ENCODE measurements at regions of chr15 and their contacts with region 1.

Region 1: GRCh38 chr15:99143655-99144610 is 39.1 kb downstream of the SYNM start:
- DNase-seq: peak; percentile 94
- H3K4me3 ChIP-seq: no peak overlapping the region
- H3K27ac ChIP-seq: peak overlapping the region; percentile 90 to 100 (median 96)
- H3K4me1 ChIP-seq: peaks cover 0 to 80% (median 68%) of the 10 kb centered on the region in 4 donors
- H3K27me3 ChIP-seq: no peaks in the 10 kb centered on the region
- CTCF ChIP-seq: no peak
- EP300 ChIP-seq: peak in 3 of 4 donors; percentile 15 to 88 (median 60)
- POLR2A ChIP-seq: no peak

Region 2: DNA sequence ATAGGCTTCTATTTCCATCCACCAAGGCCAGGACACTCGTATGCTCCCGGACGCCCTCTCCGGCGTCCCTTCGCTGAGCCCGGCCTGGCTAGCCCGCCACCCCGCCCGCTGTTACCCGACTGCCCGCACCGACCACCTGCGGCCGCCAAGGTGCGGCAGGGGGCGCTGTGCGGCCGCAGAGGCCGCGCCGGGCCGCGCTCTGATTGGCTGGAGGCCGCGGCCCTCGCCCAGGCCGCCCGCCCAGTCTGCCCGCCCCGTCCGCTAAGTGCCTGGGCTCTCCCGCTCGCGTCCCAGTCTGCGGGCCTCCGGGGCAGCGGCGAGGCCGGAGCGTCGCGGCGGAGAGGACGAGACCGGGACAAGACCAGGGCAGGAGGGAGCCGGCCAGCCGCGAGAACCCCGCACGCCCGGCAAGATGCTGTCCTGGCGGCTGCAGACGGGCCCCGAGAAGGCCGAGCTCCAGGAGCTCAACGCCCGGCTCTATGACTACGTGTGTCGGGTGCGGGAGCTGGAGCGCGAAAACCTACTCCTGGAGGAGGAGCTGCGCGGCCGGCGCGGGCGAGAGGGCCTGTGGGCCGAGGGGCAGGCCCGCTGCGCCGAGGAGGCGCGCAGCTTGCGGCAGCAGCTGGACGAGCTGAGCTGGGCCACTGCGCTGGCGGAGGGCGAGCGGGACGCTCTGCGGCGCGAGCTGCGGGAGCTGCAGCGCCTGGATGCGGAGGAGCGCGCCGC is 39.0 kb before region 1 on chr15 and contains the start of gene SYNM:
- intact Hi-C with region 1: loop called (anchors 5 kb)
- DNase-seq: peak; percentile 94
- H3K4me3 ChIP-seq: peak within 1 kb of the TSS; percentile 81 to 87 (median 82)
- H3K27ac ChIP-seq: peak within 1 kb of the TSS; percentile 90 to 100 (median 96)
- H3K4me1 ChIP-seq: peaks cover 0 to 24% (median 13%) of the 10 kb centered on the region in 4 donors
- H3K27me3 ChIP-seq: no peaks in the 10 kb centered on the region
- CTCF ChIP-seq: peak; percentile 30 to 90 (median 44)
- EP300 ChIP-seq: no peak
- POLR2A ChIP-seq: peak; percentile 87 to 95
- total RNA-seq, gene SYNM: 731 to 1,357 (median 1,117) TPM